Motor neuron (in vitro differentiated cells): ENCODE measurements at regions of chr18 and their contacts with region 1.

Region 1: GRCh38 chr18:23629444-23629946 is 33.2 kb downstream of the ANKRD29 start:
- ATAC-seq: peak in 1 of 8 experiments; percentile 55
- H3K4me3 ChIP-seq: no peak overlapping the region
- H3K27ac ChIP-seq: no peak overlapping the region
- H3K4me1 ChIP-seq: no peaks in the 10 kb centered on the region

Region 2: GRCh38 chr18:23266717-23267446 is 362.6 kb before region 1 on chr18:
- in situ Hi-C with region 1: no loop called
- ATAC-seq: no peak
- H3K4me3 ChIP-seq: no peak overlapping the region
- H3K27ac ChIP-seq: no peak overlapping the region
- H3K4me1 ChIP-seq: no peaks in the 10 kb centered on the region

Region 3: GRCh38 chr18:23784832-23785245 is 155.3 kb after region 1 on chr18:
- in situ Hi-C with region 1: loop called in 1 of 9 experiments (anchors 25 kb)
- ATAC-seq: peak in 3 of 8 experiments; percentile 94 to 95 (median 94)
- H3K4me3 ChIP-seq: no peak overlapping the region
- H3K27ac ChIP-seq: no peak overlapping the region
- H3K4me1 ChIP-seq: no peaks in the 10 kb centered on the region